Adrenal gland (tissue), 19 donors: ENCODE measurements at regions of chr5 and their contacts with region 1.

Region 1: GRCh38 chr5:10701567-10702039 is 59.4 kb downstream of the DAP start:
- DNase-seq: peak in 5 of 7 donors; percentile 37 to 62 (median 48)
- H3K4me3 ChIP-seq: no peak overlapping the region
- H3K27ac ChIP-seq: peak overlapping the region in 4 of 5 donors; percentile 18 to 79 (median 54)
- H3K4me1 ChIP-seq: peaks cover 25 to 28% of the 10 kb centered on the region in 2 donors
- H3K27me3 ChIP-seq: no peaks in the 10 kb centered on the region
- CTCF ChIP-seq: peak; percentile 22 to 70 (median 42)
- POLR2A ChIP-seq: no peak

Region 2: DNA sequence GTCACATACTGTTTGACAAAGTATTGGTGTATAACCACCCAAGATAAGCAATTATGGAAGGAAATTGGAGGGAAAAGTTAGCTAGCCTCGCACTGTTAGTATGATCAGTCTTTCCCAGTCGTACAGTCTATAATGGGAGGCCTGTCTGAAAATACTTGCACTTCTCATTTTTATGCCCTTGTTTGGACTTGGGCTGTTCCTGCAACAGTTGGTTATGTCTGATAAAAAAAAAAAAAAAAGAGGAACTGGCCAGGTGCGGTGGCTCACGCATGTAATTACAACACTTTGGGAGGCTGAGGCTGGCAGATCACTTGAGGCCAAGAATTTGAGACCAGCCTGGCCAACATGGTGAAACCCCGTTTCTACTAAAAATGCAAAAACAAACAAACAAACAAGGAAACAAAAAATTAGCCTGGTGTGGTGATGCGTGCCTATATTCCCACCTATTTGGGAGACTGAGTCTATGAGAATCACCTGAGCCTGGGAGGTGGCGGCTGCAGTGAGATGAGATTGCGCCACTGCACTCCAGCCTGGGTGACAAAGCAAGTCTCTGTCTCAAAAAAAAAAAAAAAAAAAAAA is 196.0 kb before region 1 on chr5:
- intact Hi-C with region 1: no loop called
- DNase-seq: no peak
- H3K4me3 ChIP-seq: no peak overlapping the region
- H3K27ac ChIP-seq: no peak overlapping the region
- H3K4me1 ChIP-seq: peaks cover 0 to 5% of the 10 kb centered on the region in 2 donors
- H3K27me3 ChIP-seq: peaks cover 4% of the 10 kb centered on the region
- CTCF ChIP-seq: no peak
- POLR2A ChIP-seq: no peak

Region 3: DNA sequence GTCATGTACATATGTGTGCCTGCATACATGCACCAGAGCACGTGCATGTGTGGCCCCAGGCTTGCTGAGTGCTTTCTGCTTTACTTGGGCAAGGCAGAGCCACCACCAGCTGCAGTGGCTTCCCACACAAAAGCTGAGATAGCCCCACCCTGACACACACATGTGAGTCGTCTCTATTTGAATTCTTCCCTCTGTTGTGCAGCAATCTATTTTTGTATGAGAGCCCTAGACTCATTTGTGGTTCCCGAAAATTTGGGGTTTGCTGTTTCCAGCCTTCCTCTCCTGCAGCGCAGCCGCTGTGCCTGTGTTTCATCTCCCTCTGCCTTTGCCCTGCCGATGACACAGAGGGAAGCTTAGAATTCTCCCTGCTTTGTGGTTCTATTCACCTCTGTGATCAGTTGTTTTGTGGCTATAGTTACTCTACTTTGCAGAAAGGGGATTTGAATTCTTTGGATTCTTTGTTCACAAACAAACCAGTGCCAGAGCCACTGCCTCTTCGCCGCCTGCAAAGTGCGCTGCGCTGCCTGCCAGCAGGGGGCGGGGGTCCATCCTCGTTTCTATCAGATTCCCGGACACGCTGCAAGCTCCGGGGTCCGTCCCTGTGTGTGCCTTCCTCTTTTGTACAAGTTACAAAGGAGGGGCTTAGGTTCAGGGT is 155.2 kb after region 1 on chr5:
- intact Hi-C with region 1: loop called in 1 of 2 experiments (anchors 10 kb)
- DNase-seq: peak; percentile 31 to 69 (median 58)
- H3K4me3 ChIP-seq: peak overlapping the region in 1 of 4 donors; percentile 33
- H3K27ac ChIP-seq: no peak overlapping the region
- H3K4me1 ChIP-seq: no peaks in the 10 kb centered on the region
- H3K27me3 ChIP-seq: no peaks in the 10 kb centered on the region
- CTCF ChIP-seq: peak; percentile 58 to 90 (median 64)
- POLR2A ChIP-seq: no peak